CD4-positive, alpha-beta memory T cell (primary cell): ENCODE measurements at regions of chr15 and their contacts with region 1.

Region 1: GRCh38 chr15:75335705-75336355 is at the start of gene COMMD4:
- DNase-seq: peak; percentile 58 to 71 (median 63)
- H3K4me3 ChIP-seq: peak within 1 kb of the TSS; percentile 47 to 68
- H3K4me3 Mint-ChIP-seq: peak within 1 kb of the TSS; percentile 90 to 93 (median 92)
- H3K27ac ChIP-seq: peak within 1 kb of the TSS; percentile 27
- H3K27ac Mint-ChIP-seq: peak within 1 kb of the TSS; percentile 81 to 92 (median 91)
- H3K4me1 ChIP-seq: peaks cover 15% of the 10 kb centered on the region
- H3K4me1 Mint-ChIP-seq: peaks cover 9 to 26% (median 18%) of the 10 kb centered on the region in 4 donors
- H3K27me3 ChIP-seq: no peaks in the 10 kb centered on the region
- H3K27me3 Mint-ChIP-seq: no peaks in the 10 kb centered on the region
- total RNA-seq, gene COMMD4: 33.9 to 36.4 TPM

Region 2: GRCh38 chr15:75201609-75202250 is 134.1 kb before region 1 on chr15 and contains the start of gene C15orf39:
- CTCF ChIA-PET with region 1: no interaction called
- POLR2A ChIA-PET with region 1: no interaction called
- intact Hi-C with region 1: no loop called
- DNase-seq: peak; percentile 71 to 87 (median 83)
- H3K4me3 ChIP-seq: peak within 1 kb of the TSS; percentile 65 to 70
- H3K4me3 Mint-ChIP-seq: peak within 1 kb of the TSS; percentile 89 to 97 (median 94)
- H3K27ac ChIP-seq: peak within 1 kb of the TSS; percentile 69
- H3K27ac Mint-ChIP-seq: peak within 1 kb of the TSS; percentile 90 to 96 (median 93)
- H3K4me1 ChIP-seq: peaks cover 40% of the 10 kb centered on the region
- H3K4me1 Mint-ChIP-seq: peaks cover 16 to 58% (median 30%) of the 10 kb centered on the region in 4 donors
- H3K27me3 ChIP-seq: no peaks in the 10 kb centered on the region
- H3K27me3 Mint-ChIP-seq: no peaks in the 10 kb centered on the region
- total RNA-seq, gene C15orf39: 25.9 to 27.0 TPM

Region 3: DNA sequence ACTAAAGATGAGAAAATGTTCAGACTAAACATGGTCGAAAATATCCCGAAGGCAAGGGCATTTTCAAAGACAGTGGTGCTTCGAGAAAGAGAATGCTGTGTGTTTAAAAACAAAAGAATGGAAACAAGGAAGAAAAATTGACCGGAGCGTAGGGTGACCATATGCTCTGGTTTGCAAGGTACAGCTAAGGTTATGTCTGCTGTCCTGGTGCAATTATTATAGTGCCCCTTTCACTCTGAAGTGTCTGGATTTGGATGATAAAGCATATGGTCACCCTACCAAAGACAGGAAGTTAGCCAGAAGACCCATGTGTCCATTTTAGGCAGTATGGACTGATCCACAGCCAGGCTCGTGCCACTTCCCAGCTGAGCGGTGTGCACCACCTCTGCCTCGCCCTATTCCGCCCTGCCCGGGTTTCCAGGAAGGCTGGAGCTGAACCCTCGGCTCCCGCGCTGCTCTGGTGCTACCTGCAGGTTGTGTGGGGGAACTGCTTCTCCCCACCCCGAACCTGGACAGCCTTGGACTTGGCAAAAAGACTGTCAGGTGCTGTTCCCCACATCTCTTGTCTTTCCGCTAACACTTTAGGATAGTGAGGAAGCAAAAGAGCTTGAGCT is 27.9 kb before region 1 on chr15:
- CTCF ChIA-PET with region 1: no interaction called
- POLR2A ChIA-PET with region 1: no interaction called
- intact Hi-C with region 1: no loop called
- DNase-seq: no peak
- H3K4me3 ChIP-seq: no peak overlapping the region
- H3K4me3 Mint-ChIP-seq: no peak overlapping the region
- H3K27ac ChIP-seq: no peak overlapping the region
- H3K27ac Mint-ChIP-seq: no peak overlapping the region
- H3K4me1 ChIP-seq: peaks cover 4% of the 10 kb centered on the region
- H3K4me1 Mint-ChIP-seq: peaks cover 0 to 2% (median 0%) of the 10 kb centered on the region in 4 donors
- H3K27me3 ChIP-seq: no peaks in the 10 kb centered on the region
- H3K27me3 Mint-ChIP-seq: peaks cover 15 to 28% of the 10 kb centered on the region in 2 donors

Region 4: DNA sequence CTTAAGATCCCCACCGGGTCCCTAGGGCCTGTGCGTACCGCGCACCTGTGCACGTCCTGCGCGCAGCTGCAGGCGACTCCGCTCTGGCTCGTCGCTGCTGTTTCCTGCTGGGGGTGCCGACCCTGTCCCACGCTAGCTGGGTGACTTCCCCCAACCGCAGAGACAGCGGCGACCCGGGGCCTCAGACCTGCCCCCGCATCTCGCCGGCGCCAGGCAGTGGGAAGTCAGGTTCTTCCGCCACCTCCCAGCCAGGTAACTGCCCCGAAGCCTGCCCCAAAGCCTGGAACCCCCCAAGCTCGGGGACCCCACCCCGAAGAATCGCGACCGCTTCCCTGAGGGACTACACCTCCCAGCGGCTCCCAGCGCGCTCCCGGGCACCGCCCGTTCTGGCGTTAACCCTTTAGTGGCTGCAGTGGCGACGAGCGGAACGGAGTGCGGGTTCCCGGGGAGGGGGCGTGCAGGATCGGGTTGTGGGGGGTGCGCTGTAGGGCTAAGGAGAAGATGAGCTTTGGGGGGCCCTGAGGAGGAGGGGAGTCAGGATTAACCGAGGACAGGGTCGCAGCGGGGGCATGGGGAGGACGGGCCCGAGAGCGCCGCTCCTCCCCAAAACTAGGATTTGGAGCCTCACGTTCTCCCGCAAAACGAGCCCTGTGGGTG is 11.5 kb after region 1 on chr15:
- CTCF ChIA-PET with region 1: interaction called, 4 read pairs
- POLR2A ChIA-PET with region 1: interaction called, 11 read pairs
- intact Hi-C with region 1: no loop called
- DNase-seq: peak; percentile 66 to 75 (median 70)
- H3K4me3 ChIP-seq: peak overlapping the region; percentile 30 to 72
- H3K4me3 Mint-ChIP-seq: peak overlapping the region; percentile 75 to 93 (median 86)
- H3K27ac ChIP-seq: peak overlapping the region; percentile 58
- H3K27ac Mint-ChIP-seq: peak overlapping the region; percentile 84 to 94 (median 86)
- H3K4me1 ChIP-seq: peaks cover 36% of the 10 kb centered on the region
- H3K4me1 Mint-ChIP-seq: peaks cover 14 to 38% (median 26%) of the 10 kb centered on the region in 4 donors
- H3K27me3 ChIP-seq: no peaks in the 10 kb centered on the region
- H3K27me3 Mint-ChIP-seq: no peaks in the 10 kb centered on the region